Endothelial cell of umbilical vein (primary cell): ENCODE measurements at regions of chr15 and their contacts with region 1.

Region 1: GRCh38 chr15:101251830-101252820 is at the start of gene CHSY1:
- DNase-seq: peak; percentile 94
- H3K4me3 ChIP-seq: peak within 1 kb of the TSS; percentile 53 to 86 (median 83)
- H3K27ac ChIP-seq: peak within 1 kb of the TSS; percentile 70
- H3K4me1 ChIP-seq: peaks cover 30% of the 10 kb centered on the region
- H3K27me3 ChIP-seq: no peaks in the 10 kb centered on the region
- CTCF ChIP-seq: peak; percentile 12 to 25
- POLR2A ChIP-seq: peak; percentile 68
- total RNA-seq, gene CHSY1: 47.0 and 50.8 TPM in 2 replicates

Region 2: GRCh38 chr15:101056366-101057334 is 195.5 kb before region 1 on chr15:
- CTCF ChIA-PET with region 1: no interaction called
- POLR2A ChIA-PET with region 1: no interaction called
- dilution Hi-C with region 1: no loop called
- intact Hi-C with region 1: no loop called
- DNase-seq: no peak
- H3K4me3 ChIP-seq: no peak overlapping the region
- H3K27ac ChIP-seq: no peak overlapping the region
- H3K4me1 ChIP-seq: no peaks in the 10 kb centered on the region
- H3K27me3 ChIP-seq: no peaks in the 10 kb centered on the region
- CTCF ChIP-seq: no peak
- POLR2A ChIP-seq: no peak

Region 3: DNA sequence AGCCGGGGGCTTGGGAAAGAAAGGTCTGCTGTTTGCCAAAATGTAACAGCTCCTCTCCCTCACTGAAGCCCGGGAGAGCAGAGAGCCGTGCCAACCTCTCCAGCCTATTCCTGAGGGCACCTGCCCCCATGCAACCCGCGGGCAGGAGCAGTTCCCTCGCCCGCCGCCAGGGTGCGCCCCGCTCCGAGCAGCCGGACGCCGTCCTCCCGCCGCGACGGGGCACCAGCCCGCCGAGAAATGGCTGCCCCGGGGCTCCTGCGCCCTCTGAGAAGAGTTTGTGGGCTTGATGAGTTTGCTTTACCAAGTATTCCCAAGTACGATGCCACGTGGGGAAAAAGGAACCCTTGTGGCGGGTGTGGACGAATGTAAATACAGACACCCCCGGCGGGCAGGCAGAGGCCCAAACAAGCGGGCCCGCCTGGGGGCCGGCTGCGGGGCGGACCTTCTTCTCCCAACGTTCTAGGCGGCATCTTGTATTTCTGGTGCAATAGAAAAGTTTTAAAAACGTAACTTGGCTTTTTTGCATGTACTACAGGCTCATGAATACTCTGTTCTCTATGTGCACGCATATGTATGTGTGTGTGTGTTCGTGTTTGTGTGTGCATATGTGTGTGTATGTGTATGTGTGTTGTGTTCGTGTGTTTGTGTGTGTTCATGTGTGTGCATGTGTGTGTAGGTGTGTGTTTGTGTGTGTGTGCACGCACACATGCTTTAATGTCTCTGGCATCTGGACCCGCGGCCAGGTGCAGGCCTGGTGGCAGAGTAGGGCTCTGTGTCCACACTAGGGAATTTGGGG is 163.1 kb before region 1 on chr15:
- CTCF ChIA-PET with region 1: interaction called, 33 read pairs
- POLR2A ChIA-PET with region 1: no interaction called
- dilution Hi-C with region 1: no loop called
- intact Hi-C with region 1: loop called (anchors 1 kb)
- DNase-seq: peak; percentile 47
- H3K4me3 ChIP-seq: no peak overlapping the region
- H3K27ac ChIP-seq: no peak overlapping the region
- H3K4me1 ChIP-seq: peaks cover 17% of the 10 kb centered on the region
- H3K27me3 ChIP-seq: no peaks in the 10 kb centered on the region
- CTCF ChIP-seq: peak; percentile 90 to 98
- POLR2A ChIP-seq: no peak

Region 4: DNA sequence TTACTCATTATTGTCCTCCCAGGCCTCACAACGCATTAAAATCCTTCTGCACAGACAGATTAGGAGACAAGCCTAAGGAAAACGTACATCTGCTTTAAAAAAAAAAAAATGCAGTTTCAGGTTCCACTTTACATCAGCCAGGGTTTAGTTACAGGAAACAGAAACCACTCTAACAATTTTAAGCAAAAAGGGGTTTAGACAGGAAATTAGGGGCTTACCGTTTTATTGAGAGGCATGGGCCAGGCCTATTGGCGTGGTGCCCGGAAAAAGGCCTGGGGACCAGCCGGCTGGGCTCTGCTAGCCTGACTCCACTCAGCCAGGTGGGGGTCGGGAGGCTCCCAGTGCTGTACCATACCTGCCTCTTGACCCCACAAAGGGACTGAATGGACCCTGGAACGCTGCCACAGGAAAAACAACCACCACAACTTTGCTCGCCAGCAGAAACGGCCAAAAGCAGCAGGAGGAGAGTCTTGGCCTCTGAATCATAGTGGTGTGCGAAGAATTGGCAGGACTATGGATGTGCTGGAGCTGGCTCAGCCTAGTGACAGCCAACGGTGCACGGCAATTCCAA is 124.5 kb before region 1 on chr15:
- CTCF ChIA-PET with region 1: interaction called, 14 read pairs
- POLR2A ChIA-PET with region 1: interaction called, 14 read pairs
- dilution Hi-C with region 1: no loop called
- intact Hi-C with region 1: loop called (anchors 1 kb)
- DNase-seq: peak; percentile 94
- H3K4me3 ChIP-seq: no peak overlapping the region
- H3K27ac ChIP-seq: peak overlapping the region; percentile 63
- H3K4me1 ChIP-seq: peaks cover 20% of the 10 kb centered on the region
- H3K27me3 ChIP-seq: no peaks in the 10 kb centered on the region
- CTCF ChIP-seq: no peak
- POLR2A ChIP-seq: no peak

Region 5: GRCh38 chr15:101176625-101177024 is 75.5 kb before region 1 on chr15:
- CTCF ChIA-PET with region 1: interaction called, 5 read pairs
- POLR2A ChIA-PET with region 1: interaction called, 4 read pairs
- dilution Hi-C with region 1: no loop called
- intact Hi-C with region 1: loop called (anchors 1 kb)
- DNase-seq: peak; percentile 79
- H3K4me3 ChIP-seq: no peak overlapping the region
- H3K27ac ChIP-seq: peak overlapping the region; percentile 68
- H3K4me1 ChIP-seq: peaks cover 27% of the 10 kb centered on the region
- H3K27me3 ChIP-seq: no peaks in the 10 kb centered on the region
- CTCF ChIP-seq: no peak
- POLR2A ChIP-seq: no peak

Region 6: GRCh38 chr15:101201406-101202174 is 50.5 kb before region 1 on chr15:
- CTCF ChIA-PET with region 1: interaction called, 4 read pairs
- POLR2A ChIA-PET with region 1: no interaction called
- dilution Hi-C with region 1: no loop called
- intact Hi-C with region 1: loop called (anchors 1 kb)
- DNase-seq: peak; percentile 93
- H3K4me3 ChIP-seq: no peak overlapping the region
- H3K27ac ChIP-seq: peak overlapping the region; percentile 36
- H3K4me1 ChIP-seq: peaks cover 23% of the 10 kb centered on the region
- H3K27me3 ChIP-seq: no peaks in the 10 kb centered on the region
- CTCF ChIP-seq: no peak
- POLR2A ChIP-seq: peak; percentile 35

Region 7: DNA sequence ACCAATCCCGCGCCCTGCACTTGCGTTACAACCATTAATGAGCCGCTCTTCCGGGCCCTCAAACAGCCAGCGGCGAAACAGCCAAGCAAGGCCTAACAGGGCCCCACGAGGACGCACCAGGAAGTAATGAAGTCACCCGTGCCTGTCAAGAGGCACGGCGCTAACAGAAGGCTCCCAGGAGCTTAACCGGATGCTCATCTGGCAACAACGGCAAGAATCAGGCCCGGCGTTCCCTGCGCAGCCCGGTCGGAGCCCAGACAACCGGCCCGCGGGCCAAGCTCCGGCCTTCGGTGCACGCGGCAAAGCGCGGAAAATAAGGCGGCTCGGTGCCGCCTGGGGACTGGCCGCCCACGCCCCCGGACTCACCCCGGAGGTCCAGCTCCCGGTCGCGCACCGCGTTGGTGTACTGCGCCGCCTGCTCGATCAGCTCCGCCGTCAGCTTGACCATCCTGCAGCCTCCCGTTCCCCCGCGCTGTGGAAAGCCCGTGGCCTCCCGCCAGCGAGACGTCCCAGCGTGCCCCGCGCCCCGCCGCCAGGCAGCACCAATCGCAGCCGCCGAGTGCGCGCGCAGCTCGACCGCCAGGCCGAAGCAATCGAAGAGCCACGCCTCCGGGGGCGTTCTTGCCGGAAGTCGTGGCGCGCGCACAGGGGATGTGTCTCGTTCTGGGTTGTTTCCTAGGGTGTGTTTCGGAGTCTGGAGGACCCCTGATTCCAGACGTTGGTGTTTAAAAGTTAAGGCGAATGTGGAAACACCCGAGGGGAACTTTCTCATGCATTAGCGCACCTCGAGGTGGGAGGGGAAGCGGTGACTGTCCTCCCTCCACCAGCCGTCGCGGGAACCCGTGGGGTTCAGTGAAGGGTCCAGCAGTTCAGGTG is 42.8 kb after region 1 on chr15 and contains the start of gene SNRPA1:
- CTCF ChIA-PET with region 1: no interaction called
- POLR2A ChIA-PET with region 1: no interaction called
- dilution Hi-C with region 1: no loop called
- intact Hi-C with region 1: no loop called
- DNase-seq: peak; percentile 95
- H3K4me3 ChIP-seq: peak within 1 kb of the TSS; percentile 77 to 94 (median 80)
- H3K27ac ChIP-seq: peak within 1 kb of the TSS; percentile 70
- H3K4me1 ChIP-seq: peaks cover 14% of the 10 kb centered on the region
- H3K27me3 ChIP-seq: no peaks in the 10 kb centered on the region
- CTCF ChIP-seq: no peak
- POLR2A ChIP-seq: peak; percentile 53
- total RNA-seq, gene SNRPA1: 80.8 and 82.7 TPM in 2 replicates

Region 8: DNA sequence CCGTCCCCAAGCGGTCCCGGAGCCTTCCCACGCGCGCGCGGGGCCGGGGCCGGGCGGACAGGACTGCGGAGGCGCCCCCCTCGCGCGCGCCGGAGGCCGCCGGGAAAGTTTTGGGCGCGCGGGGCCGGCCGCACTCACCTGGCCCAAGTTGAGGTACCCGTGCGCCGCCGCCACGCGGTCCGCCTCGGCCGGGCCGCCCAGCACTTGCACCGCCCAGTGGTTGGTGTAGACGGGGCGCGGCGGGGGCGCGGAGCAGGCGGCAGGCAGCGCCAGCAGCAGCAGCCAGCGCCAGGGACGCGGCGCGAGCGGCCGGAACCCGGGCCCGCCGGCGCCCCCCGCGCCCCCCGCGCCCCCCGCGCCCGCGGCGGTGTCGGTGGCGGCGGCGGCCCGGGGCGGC is 237.1 kb after region 1 on chr15:
- CTCF ChIA-PET with region 1: no interaction called
- POLR2A ChIA-PET with region 1: no interaction called
- dilution Hi-C with region 1: no loop called
- intact Hi-C with region 1: no loop called
- DNase-seq: no peak
- H3K4me3 ChIP-seq: peak overlapping the region in 1 of 3 experiments; percentile 3
- H3K27ac ChIP-seq: no peak overlapping the region
- H3K4me1 ChIP-seq: no peaks in the 10 kb centered on the region
- H3K27me3 ChIP-seq: peaks cover 28 to 36% of the 10 kb centered on the region in 2 experiments
- CTCF ChIP-seq: no peak
- POLR2A ChIP-seq: no peak